Cardiac septum (tissue), 1 donor: ENCODE measurements at regions of chr19 and their contacts with region 1.

Region 1: DNA sequence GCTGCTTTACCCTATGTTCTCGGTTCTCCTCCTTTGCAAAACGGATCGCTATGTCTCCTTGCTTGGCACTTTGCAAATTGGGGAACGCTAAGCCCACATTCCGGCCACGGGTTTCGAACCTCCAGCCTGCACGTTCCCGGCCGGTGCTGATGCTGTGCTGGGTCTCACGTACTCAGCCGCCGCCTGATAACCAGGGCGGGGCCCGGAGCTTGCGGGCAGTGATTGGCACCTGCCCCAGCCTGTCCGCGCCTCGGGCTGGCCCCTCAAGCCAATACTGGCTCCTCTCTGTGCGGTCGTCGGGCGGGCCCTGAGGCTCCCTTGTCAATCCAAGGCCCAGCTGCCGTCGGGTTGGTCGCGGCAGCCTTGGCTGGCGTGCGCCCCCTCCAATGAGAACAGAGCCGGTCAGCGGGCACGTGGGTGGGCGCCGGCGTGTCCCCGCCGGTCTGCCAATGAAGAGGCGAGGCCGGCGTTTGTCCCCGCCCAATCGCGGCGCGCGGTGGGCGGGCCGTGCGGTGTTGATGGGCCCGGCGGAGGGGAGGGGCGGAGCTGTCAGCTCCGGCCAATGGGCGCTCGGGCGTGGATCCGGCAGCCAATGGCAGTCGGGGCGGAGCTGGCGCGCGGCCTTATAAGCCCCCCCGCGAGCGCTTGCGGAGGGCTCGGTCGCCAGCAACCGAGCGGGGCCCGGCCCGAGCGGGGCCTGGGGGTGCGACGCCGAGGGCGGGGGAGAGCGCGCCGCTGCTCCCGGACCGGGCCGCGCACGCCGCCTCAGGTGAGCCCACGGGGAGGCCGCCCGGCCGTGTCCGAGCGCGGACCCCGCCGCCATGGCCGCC is at the start of gene KDM4B:
- DNase-seq: peak; percentile 99
- total RNA-seq, gene KDM4B: 27.6 TPM

Region 2: GRCh38 chr19:4867534-4868285 is 101.0 kb before region 1 on chr19 and contains the start of gene PLIN3:
- intact Hi-C with region 1: loop called (anchors 5 kb)
- DNase-seq: peak; percentile 99
- total RNA-seq, gene PLIN3: 21.7 TPM

Region 3: DNA sequence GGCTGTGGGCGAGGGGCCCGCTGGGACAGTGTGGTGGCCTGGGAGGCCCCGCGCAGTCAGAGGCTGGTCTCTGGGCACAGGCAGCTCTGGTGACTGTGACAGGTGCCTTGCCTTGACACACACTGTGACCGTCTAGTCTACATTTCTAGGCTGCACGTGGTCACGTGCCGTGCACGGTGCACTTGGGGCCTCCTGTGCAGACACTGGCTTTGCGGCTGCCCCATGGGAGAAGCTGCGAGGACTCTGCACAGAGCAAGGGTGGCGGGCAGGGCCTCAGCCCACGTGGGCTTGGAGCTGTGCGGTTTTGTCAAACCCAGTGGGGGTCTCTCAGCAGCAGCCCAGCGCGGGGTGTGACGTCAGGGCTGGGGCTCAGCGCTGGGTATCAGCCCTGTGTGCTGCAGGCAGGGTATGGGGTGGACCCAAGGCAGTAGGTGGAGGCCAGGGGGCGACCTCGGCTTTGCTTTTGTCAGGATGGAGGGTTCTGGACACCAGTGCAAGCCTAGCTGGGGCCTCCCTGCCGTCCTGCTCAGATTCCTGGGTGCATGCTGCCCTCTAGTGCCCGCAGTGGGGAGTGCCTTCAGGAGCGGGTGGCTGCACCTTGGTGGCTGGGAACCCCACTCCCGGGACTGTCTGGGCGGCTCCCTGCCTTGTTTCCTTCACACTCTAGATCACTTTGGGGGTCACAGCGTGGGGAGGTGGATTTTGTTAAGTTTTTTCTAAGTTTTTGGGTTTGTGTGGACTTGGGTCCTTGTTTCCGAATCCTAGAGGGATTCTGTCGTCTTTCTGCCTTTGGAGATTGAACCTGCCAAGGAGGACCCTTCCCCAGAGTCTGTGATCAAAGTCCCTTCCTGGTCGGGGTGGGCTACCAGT is 62.8 kb after region 1 on chr19:
- intact Hi-C with region 1: loop called (anchors 5 kb)
- DNase-seq: peak; percentile 90